ENCODE measurements at regions of chr3 and their contacts with region 1.

Region 1: DNA sequence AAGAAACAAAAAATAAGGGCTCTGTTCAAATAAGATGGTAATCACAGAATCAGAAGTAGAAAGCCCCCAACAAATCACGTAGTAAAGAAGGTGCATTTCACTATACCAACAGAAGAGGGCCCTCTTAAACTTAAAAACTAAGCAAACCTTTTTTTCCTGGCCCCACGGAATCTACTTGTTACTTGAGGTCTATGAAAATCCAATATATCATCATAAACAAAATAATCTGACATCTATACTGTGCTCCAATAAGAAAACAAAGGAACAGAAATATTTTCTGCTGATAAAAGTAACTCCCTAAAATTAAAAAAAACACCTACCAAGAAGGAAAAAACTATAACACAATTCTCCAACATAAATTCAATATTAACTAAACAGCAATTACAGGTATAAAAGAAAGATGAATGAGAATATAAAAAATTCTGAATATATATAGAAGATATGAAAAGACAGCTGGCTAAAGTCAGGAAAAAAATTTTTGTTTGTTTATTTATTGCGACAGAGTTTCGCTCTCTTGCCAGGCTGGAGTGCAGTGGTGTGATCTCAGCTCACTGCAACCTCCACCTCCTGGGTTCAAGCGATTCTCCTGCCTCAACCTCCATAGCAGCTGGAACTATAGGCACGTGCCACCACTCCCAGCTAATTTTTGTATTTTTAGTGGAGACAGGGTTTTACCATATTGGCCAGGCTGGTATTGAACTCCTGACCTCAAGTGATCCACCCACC is 81.8 kb downstream of the CLASP2 start:
- DNase-seq: peak in 1 of 2 donors; percentile 62
- ATAC-seq: peak in 2 of 3 donors; percentile 48 to 70
- H3K4me3 ChIP-seq: no peak overlapping the region
- H3K4me3 Mint-ChIP-seq: no peak overlapping the region
- H3K27ac ChIP-seq: no peak overlapping the region
- H3K27ac Mint-ChIP-seq: peak overlapping the region; percentile 16 to 37
- H3K4me1 ChIP-seq: no peaks in the 10 kb centered on the region
- H3K4me1 Mint-ChIP-seq: peaks cover 0 to 15% of the 10 kb centered on the region in 2 donors
- H3K27me3 ChIP-seq: no peaks in the 10 kb centered on the region
- H3K27me3 Mint-ChIP-seq: no peaks in the 10 kb centered on the region
- CTCF ChIP-seq: peak; percentile 73

Region 2: GRCh38 chr3:33597257-33597689 is 39.0 kb before region 1 on chr3:
- intact Hi-C with region 1: no loop called
- DNase-seq: no peak
- ATAC-seq: no peak
- H3K4me3 ChIP-seq: no peak overlapping the region
- H3K4me3 Mint-ChIP-seq: no peak overlapping the region
- H3K27ac ChIP-seq: no peak overlapping the region
- H3K27ac Mint-ChIP-seq: no peak overlapping the region
- H3K4me1 ChIP-seq: no peaks in the 10 kb centered on the region
- H3K4me1 Mint-ChIP-seq: no peaks in the 10 kb centered on the region
- H3K27me3 ChIP-seq: no peaks in the 10 kb centered on the region
- H3K27me3 Mint-ChIP-seq: no peaks in the 10 kb centered on the region
- CTCF ChIP-seq: no peak

Region 3: GRCh38 chr3:33717866-33718594 is 81.7 kb after region 1 on chr3 and contains the start of gene CLASP2:
- intact Hi-C with region 1: loop called (anchors 1 kb)
- DNase-seq: peak; percentile 85 to 94
- ATAC-seq: peak; percentile 81 to 91 (median 87)
- H3K4me3 ChIP-seq: peak within 1 kb of the TSS; percentile 64
- H3K4me3 Mint-ChIP-seq: no peak within 1 kb of the TSS
- H3K27ac ChIP-seq: peak within 1 kb of the TSS; percentile 93
- H3K27ac Mint-ChIP-seq: no peak within 1 kb of the TSS
- H3K4me1 ChIP-seq: peaks cover 13% of the 10 kb centered on the region
- H3K4me1 Mint-ChIP-seq: peaks cover 6 to 10% of the 10 kb centered on the region in 2 donors
- H3K27me3 ChIP-seq: no peaks in the 10 kb centered on the region
- H3K27me3 Mint-ChIP-seq: peaks cover 4 to 20% of the 10 kb centered on the region in 2 donors
- CTCF ChIP-seq: no peak
- total RNA-seq, gene CLASP2: 93.8 to 109 (median 99.3) TPM

Region 4: GRCh38 chr3:33773637-33774036 is 137.3 kb after region 1 on chr3:
- intact Hi-C with region 1: loop called (anchors 1 kb)
- DNase-seq: no peak
- ATAC-seq: no peak
- H3K4me3 ChIP-seq: no peak overlapping the region
- H3K4me3 Mint-ChIP-seq: no peak overlapping the region
- H3K27ac ChIP-seq: no peak overlapping the region
- H3K27ac Mint-ChIP-seq: no peak overlapping the region
- H3K4me1 ChIP-seq: no peaks in the 10 kb centered on the region
- H3K4me1 Mint-ChIP-seq: no peaks in the 10 kb centered on the region
- H3K27me3 ChIP-seq: no peaks in the 10 kb centered on the region
- H3K27me3 Mint-ChIP-seq: peaks cover 0 to 4% of the 10 kb centered on the region in 2 donors
- CTCF ChIP-seq: no peak

Region 5: DNA sequence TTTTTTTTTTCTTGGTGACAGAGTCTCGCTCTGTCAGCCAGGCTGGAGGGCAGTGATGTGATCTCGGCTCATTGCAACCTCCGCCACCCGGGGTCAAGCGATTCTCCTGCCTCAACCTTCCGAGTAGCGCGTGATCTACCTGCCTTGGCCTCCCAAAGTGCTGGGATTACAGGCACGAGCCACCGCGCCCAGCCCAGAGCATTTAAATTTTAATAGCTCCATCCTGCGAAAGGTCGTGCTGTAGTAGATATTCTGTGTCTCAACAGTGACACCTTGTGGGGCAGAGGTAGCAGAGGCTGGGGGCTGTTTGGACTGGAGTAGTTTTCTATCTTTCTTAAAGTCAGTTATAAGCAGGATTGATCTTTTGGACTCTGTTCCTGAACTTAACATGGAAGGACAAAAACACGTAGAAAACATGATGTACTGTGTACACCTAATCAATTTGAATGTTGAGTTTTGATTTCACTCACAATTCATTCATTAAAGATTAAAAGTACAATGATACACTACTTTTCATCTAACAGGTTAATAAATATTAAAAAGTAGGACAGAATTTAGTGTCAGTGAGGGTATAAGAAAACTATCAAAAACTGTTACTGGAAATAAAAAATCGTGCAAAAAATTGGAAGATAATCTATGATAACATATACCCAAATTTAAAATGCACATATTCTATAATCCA is 151.2 kb after region 1 on chr3:
- intact Hi-C with region 1: loop called (anchors 1 kb)
- DNase-seq: peak; percentile 30 to 85
- ATAC-seq: peak; percentile 76 to 98 (median 97)
- H3K4me3 ChIP-seq: no peak overlapping the region
- H3K4me3 Mint-ChIP-seq: no peak overlapping the region
- H3K27ac ChIP-seq: no peak overlapping the region
- H3K27ac Mint-ChIP-seq: no peak overlapping the region
- H3K4me1 ChIP-seq: peaks cover 4% of the 10 kb centered on the region
- H3K4me1 Mint-ChIP-seq: peaks cover 0 to 8% of the 10 kb centered on the region in 2 donors
- H3K27me3 ChIP-seq: no peaks in the 10 kb centered on the region
- H3K27me3 Mint-ChIP-seq: peaks cover 10 to 11% of the 10 kb centered on the region in 2 donors
- CTCF ChIP-seq: peak; percentile 69